HAP-1 (cell line): ENCODE measurements at regions of chr11 and their contacts with region 1.

Region 1: GRCh38 chr11:128039140-128040021 is 548.0 kb downstream of the ETS1 start:
- DNase-seq: no peak
- H3K4me3 ChIP-seq: no peak overlapping the region
- H3K4me1 ChIP-seq: no peaks in the 10 kb centered on the region
- H3K27me3 ChIP-seq: no peaks in the 10 kb centered on the region

Region 2: GRCh38 chr11:127925475-127925874 is 113.9 kb before region 1 on chr11:
- in situ Hi-C with region 1: no loop called
- DNase-seq: no peak
- H3K4me3 ChIP-seq: no peak overlapping the region
- H3K4me1 ChIP-seq: no peaks in the 10 kb centered on the region
- H3K27me3 ChIP-seq: no peaks in the 10 kb centered on the region

Region 3: GRCh38 chr11:128831174-128832120 is 792.1 kb after region 1 on chr11:
- in situ Hi-C with region 1: loop called (anchors 25 kb)
- DNase-seq: peak; percentile 76 to 83
- H3K4me3 ChIP-seq: no peak overlapping the region
- H3K4me1 ChIP-seq: no peaks in the 10 kb centered on the region
- H3K27me3 ChIP-seq: no peaks in the 10 kb centered on the region